Dendritic cell treated with granulocyte-macrophage colony-stimulating factor and Interleukin-4, amounts not matched to agents 40 ng/mL and 50 ng/mL, for 4 days (primary cell): ENCODE measurements at regions of chr12 and their contacts with region 1.

Region 1: DNA sequence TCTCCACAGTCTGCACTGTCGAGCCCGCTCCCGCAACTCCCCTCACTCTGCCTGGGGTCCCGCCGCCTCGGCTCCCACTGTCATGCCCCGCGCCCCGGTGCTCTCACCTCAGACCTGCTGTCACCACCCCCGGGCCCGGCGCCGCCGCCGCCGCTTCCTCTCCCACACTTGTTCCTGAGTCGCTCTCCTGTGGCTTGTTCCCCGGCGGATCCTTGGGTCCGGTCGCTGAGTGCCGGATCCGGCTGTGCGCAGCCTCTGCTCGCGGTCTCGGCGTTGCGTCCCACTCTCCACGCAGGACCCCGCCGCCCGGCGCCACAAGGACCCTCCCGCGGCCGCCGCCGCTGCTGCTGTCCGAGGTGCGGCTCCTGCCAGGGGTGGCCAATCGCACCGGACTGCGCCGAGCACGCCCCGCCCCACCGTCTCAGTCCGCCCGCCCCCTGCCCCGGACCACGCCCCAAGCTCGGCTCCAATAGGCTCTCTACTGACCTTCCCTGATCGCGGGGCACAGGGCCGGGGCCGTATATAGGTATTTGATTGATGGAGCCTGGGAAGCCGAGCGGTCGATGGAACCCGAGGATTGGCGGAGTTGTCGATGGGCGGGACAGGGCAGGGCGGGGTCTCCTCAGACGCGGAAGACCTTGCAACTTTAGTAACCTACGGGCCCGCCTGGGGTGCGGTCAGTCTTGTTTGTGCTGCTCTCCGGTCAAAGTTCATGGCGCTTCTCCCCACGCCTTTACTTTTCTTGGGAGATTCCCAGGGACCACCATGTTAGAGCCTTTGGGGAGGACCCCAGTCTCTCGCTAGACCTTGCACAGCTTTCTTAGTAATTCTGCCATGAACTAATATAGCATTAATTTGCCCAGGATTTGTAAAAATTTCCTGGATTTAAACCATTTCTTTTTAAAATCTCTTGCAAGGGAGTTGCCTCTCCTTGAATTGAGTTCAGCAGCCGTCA is at the start of gene TAOK3:
- H3K4me3 Mint-ChIP-seq: peak within 1 kb of the TSS; percentile 100
- H3K27ac Mint-ChIP-seq: peak within 1 kb of the TSS; percentile 98
- H3K4me1 Mint-ChIP-seq: peaks cover 47% of the 10 kb centered on the region
- H3K27me3 Mint-ChIP-seq: no peaks in the 10 kb centered on the region

Region 2: GRCh38 chr12:118061011-118061875 is 311.6 kb before region 1 on chr12 and contains the start of gene WSB2:
- intact Hi-C with region 1: loop called (anchors 5 kb)
- H3K4me3 Mint-ChIP-seq: peak within 1 kb of the TSS; percentile 90
- H3K27ac Mint-ChIP-seq: peak within 1 kb of the TSS; percentile 95
- H3K4me1 Mint-ChIP-seq: peaks cover 63% of the 10 kb centered on the region
- H3K27me3 Mint-ChIP-seq: no peaks in the 10 kb centered on the region

Region 3: GRCh38 chr12:118183705-118184104 is 189.1 kb before region 1 on chr12:
- intact Hi-C with region 1: loop called (anchors 1 kb)
- H3K4me3 Mint-ChIP-seq: no peak overlapping the region
- H3K27ac Mint-ChIP-seq: no peak overlapping the region
- H3K4me1 Mint-ChIP-seq: peaks cover 11% of the 10 kb centered on the region
- H3K27me3 Mint-ChIP-seq: no peaks in the 10 kb centered on the region

Region 4: DNA sequence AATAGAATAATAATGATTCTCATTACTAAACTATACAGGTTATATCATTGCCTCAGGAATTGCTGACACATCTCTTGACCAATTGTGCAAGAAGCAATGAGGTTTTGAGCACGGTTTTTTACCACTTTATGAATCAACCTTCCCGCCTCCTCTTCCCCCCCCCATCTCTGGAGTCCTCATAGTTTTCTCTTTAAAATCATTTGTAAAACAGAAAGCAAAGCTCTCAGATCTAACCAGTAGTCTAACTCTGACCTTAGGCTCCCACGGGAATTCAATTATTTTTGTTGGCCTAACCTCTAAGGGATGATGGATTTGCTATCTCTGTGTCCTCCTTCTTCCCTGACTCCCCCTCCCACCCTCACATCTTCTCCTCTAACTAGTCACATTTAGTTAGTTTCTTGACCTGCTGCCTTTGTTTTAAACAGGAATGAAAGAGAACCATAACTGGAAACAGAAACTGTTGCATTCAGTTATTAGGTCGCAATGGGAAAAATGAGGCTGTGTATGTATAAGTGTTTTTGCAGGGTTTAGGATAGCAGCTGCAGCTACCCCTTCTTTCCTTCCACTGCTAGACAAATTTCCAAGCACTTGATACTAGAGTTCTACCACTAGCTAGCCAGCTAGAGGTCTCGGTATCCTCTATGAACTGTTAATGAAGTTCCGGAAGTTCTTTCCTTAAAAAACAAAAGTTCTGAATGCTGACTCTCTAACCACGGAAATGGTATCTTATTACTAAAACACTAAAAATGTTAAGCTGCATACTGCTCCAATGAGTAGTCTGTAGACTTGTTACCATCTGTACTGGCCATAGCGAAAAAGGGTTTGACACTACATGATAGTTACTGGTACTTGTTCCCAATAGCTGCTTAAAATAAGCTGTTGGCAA is 65.5 kb before region 1 on chr12:
- intact Hi-C with region 1: loop called (anchors 5 kb)
- H3K4me3 Mint-ChIP-seq: peak overlapping the region; percentile 56
- H3K27ac Mint-ChIP-seq: peak overlapping the region; percentile 85
- H3K4me1 Mint-ChIP-seq: peaks cover 38% of the 10 kb centered on the region
- H3K27me3 Mint-ChIP-seq: no peaks in the 10 kb centered on the region

Region 5: GRCh38 chr12:118357257-118358007 is 15.4 kb before region 1 on chr12:
- intact Hi-C with region 1: loop called (anchors 1 kb)
- H3K4me3 Mint-ChIP-seq: peak overlapping the region; percentile 42
- H3K27ac Mint-ChIP-seq: peak overlapping the region; percentile 79
- H3K4me1 Mint-ChIP-seq: peaks cover 49% of the 10 kb centered on the region
- H3K27me3 Mint-ChIP-seq: no peaks in the 10 kb centered on the region